Mucosa of descending colon (tissue), 3 donors: ENCODE measurements at regions of chr1 and their contacts with region 1.

Region 1: GRCh38 chr1:226121587-226122400 is 59.3 kb downstream of the H3-3A start:
- DNase-seq: peak; percentile 82 to 89 (median 87)
- ATAC-seq: peak; percentile 67
- H3K4me3 ChIP-seq: peak overlapping the region; percentile 35
- H3K4me1 ChIP-seq: peaks cover 32% of the 10 kb centered on the region
- CTCF ChIP-seq: peak; percentile 92

Region 2: DNA sequence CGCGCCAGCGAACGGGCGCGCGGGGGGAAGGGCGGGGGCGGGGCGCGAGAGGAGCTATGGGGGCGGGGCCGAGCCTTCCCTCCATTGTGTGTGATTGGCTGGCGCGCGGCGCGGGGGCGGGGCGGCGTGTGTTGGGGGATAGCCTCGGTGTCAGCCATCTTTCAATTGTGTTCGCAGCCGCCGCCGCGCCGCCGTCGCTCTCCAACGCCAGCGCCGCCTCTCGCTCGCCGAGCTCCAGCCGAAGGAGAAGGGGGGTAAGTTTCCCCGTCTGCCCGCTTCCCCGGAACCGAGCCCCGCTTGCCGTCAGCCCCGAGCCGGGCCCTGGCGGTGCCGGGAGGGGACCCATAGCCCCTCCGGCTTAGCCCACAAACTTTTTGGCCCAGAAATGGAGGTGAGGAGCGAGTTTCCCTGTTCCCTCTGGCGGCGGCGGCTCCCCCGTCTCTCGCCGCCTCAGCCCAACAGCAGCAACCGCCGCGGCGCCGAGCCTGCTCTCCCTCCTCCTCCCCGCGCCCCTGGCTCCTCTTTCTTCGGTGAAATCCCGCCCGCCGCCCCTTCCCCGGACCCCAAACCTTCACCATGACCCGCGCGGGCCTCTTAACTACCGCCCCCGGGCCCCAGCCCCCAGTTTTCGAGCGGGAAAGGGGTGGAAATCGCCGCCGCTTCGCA is 59.1 kb before region 1 on chr1 and contains the start of gene H3-3A:
- intact Hi-C with region 1: loop called (anchors 5 to 10 kb)
- DNase-seq: peak; percentile 98 to 100 (median 99)
- ATAC-seq: peak; percentile 91
- H3K4me3 ChIP-seq: peak within 1 kb of the TSS; percentile 63
- H3K4me1 ChIP-seq: peaks cover 35% of the 10 kb centered on the region
- CTCF ChIP-seq: no peak
- total RNA-seq, gene H3-3A: 466 to 839 (median 627) TPM

Region 3: GRCh38 chr1:226195144-226195543 is 73.3 kb after region 1 on chr1:
- intact Hi-C with region 1: loop called (anchors 5 kb)
- DNase-seq: no peak
- ATAC-seq: no peak
- H3K4me3 ChIP-seq: no peak overlapping the region
- H3K4me1 ChIP-seq: no peaks in the 10 kb centered on the region
- CTCF ChIP-seq: no peak